ENCODE measurements at regions of chr1 and their contacts with region 1.

Region 1: DNA sequence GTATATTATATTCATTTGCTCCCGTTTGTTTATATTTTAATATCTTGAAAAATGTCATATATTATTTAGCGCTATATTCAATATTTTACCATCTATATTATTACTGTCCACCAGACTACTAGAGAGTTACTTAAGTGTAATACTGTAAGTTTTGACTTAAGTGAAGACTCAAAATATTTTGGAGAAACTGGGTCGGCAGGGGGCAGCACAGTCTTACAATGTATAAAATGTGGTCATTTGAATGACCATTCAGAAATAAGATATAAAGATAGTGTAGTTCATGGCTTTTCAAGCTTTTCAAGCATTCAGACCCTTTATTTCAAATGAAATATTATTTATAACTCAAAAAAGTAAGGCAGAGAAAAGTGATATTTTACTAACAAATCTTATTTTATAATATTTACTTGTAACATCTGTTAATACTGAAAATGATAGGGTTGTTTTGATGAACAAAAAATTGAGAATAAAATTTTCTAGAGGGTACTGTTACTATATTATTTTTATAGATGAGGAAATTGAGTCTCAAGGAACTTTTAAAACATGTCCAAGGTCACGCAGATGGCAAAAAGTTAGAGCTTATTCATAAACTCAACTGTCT is 89.0 kb upstream of the SERTAD4 start:
- DNase-seq: peak; percentile 13 to 77
- H3K4me3 ChIP-seq: no peak overlapping the region
- H3K27ac ChIP-seq: no peak overlapping the region
- H3K4me1 ChIP-seq: no peaks in the 10 kb centered on the region
- H3K27me3 ChIP-seq: no peaks in the 10 kb centered on the region
- CTCF ChIP-seq: peak in 2 of 3 experiments; percentile 38 to 42; a peak in 2 of 4 replicates
- EP300 ChIP-seq: no peak
- POLR2A ChIP-seq: no peak
- RAD21 ChIP-seq: peak; percentile 65 to 72

Region 2: DNA sequence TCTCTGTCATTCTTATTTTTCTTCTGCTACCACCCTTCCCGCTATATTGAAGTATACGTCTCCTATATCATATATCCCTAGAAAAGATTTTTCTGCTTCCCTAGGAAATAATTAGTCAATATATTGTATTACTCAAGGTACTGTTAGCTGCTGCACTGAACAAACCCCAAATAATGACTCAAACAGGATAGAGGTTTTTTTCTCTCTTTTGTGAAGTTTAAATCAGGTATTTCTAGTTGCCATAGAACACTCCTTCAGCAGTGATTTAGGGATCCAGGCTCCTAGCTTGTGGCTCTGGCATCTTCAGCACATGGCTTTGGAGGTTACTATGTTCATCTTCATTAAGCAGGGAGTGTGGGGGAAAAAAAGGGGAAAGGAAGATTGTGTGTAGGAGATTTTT is 187.4 kb before region 1 on chr1:
- CTCF ChIA-PET with region 1: no interaction called
- POLR2A ChIA-PET with region 1: no interaction called
- DNase-seq: no peak
- H3K4me3 ChIP-seq: no peak overlapping the region
- H3K27ac ChIP-seq: no peak overlapping the region
- H3K4me1 ChIP-seq: no peaks in the 10 kb centered on the region
- H3K27me3 ChIP-seq: no peaks in the 10 kb centered on the region
- CTCF ChIP-seq: no peak
- EP300 ChIP-seq: no peak
- POLR2A ChIP-seq: no peak
- RAD21 ChIP-seq: no peak

Region 3: DNA sequence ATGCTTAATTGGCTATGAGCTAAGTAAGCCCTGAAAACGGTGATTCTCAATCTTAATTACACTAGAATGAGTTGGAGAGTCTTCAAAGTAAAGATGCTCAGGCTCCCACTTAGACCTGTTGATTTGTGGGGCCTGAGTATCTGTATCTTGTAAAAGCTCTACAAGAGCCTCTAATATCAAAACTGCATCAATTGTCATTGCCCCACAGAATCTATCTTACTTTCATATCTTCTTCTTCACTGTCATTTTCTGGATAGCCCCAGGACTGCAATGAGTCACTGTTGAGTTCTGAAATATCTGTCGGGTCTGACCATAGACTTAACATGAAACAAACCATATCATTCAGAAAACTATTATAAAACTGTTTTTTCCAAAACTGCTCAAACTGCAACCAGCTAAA is 13.8 kb before region 1 on chr1:
- CTCF ChIA-PET with region 1: interaction called, 11 read pairs
- POLR2A ChIA-PET with region 1: interaction called, 3 read pairs
- DNase-seq: no peak
- H3K4me3 ChIP-seq: no peak overlapping the region
- H3K27ac ChIP-seq: no peak overlapping the region
- H3K4me1 ChIP-seq: no peaks in the 10 kb centered on the region
- H3K27me3 ChIP-seq: no peaks in the 10 kb centered on the region
- CTCF ChIP-seq: no peak
- EP300 ChIP-seq: no peak
- POLR2A ChIP-seq: no peak
- RAD21 ChIP-seq: no peak

Region 4: GRCh38 chr1:210301615-210302000 is 158.0 kb after region 1 on chr1:
- CTCF ChIA-PET with region 1: interaction called, 15 read pairs
- POLR2A ChIA-PET with region 1: no interaction called
- DNase-seq: no peak
- H3K4me3 ChIP-seq: no peak overlapping the region
- H3K27ac ChIP-seq: no peak overlapping the region
- H3K4me1 ChIP-seq: peaks cover 0 to 3% (median 0%) of the 10 kb centered on the region in 4 experiments; a peak in 1 of 7 replicates
- H3K27me3 ChIP-seq: no peaks in the 10 kb centered on the region
- CTCF ChIP-seq: no peak
- EP300 ChIP-seq: no peak
- POLR2A ChIP-seq: no peak
- RAD21 ChIP-seq: no peak

Measured in H1 (cell line).